ENCODE measurements at regions of chr6 and their contacts with region 1.

Region 1: DNA sequence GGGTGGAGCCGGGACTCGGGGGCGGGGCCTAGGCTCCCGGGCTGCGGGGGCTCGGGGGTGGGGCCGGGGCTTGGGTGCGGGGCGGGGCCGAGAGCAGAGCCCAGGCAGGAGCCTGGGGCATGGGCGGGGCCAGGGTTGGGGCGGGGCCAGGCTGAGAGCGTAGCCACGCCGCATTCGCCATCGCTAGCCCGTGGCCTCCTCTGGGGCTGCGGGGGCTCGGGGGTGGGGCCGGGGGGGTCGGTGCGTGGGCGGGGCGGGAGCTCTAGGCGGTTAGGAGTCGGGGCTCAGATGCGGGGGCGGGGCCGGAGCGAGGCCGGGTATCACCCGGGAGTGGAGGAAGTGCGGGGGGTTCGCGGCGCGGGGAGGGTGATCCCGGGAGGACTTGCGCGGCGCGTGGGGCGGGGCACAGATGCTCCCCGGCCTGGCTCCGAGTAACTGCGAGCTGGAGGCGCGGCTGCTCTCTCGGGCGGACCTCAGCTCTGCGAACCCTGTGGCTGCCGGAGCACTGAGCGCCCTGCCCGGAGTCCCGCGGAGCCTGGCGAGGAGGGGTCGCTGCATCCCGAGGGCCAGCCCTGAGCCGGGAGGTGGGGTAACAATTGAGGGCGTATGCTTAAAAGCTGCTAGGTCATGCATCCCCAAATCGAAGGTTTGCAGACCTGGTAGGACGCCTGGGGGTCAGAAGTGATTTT is 434 bp upstream of the ECI2 start:
- DNase-seq: peak; percentile 92 to 98
- H3K4me3 ChIP-seq: peak overlapping the region; percentile 80 to 87
- H3K27ac ChIP-seq: peak overlapping the region; percentile 90 to 94
- H3K4me1 ChIP-seq: peaks cover 0 to 9% of the 10 kb centered on the region in 2 donors
- H3K27me3 ChIP-seq: no peaks in the 10 kb centered on the region
- CTCF ChIP-seq: no peak

Region 2: GRCh38 chr6:3068329-3069214 is 1067.2 kb before region 1 on chr6 and contains the start of gene RIPK1:
- intact Hi-C with region 1: loop called (anchors 2 kb)
- DNase-seq: peak; percentile 74 to 95
- H3K4me3 ChIP-seq: peak within 1 kb of the TSS; percentile 77 to 85
- H3K27ac ChIP-seq: peak within 1 kb of the TSS; percentile 96 to 98
- H3K4me1 ChIP-seq: peaks cover 8 to 19% of the 10 kb centered on the region in 2 donors
- H3K27me3 ChIP-seq: no peaks in the 10 kb centered on the region
- CTCF ChIP-seq: peak in 2 of 3 experiments; percentile 26 to 46
- total RNA-seq, gene RIPK1: 20.1 TPM

Region 3: GRCh38 chr6:3798055-3798919 is 337.5 kb before region 1 on chr6:
- intact Hi-C with region 1: no loop called
- DNase-seq: no peak
- H3K4me3 ChIP-seq: no peak overlapping the region
- H3K27ac ChIP-seq: peak overlapping the region; percentile 19 to 61
- H3K4me1 ChIP-seq: peaks cover 11 to 29% of the 10 kb centered on the region in 2 donors
- H3K27me3 ChIP-seq: no peaks in the 10 kb centered on the region
- CTCF ChIP-seq: no peak

Region 4: GRCh38 chr6:4018172-4018905 is 117.5 kb before region 1 on chr6:
- intact Hi-C with region 1: loop called (anchors 2 kb)
- DNase-seq: peak; percentile 81 to 96
- H3K4me3 ChIP-seq: peak overlapping the region; percentile 78 to 81
- H3K27ac ChIP-seq: peak overlapping the region; percentile 97 to 99
- H3K4me1 ChIP-seq: peaks cover 7 to 36% of the 10 kb centered on the region in 2 donors
- H3K27me3 ChIP-seq: no peaks in the 10 kb centered on the region
- CTCF ChIP-seq: peak; percentile 43 to 48 (median 43)

Region 5: GRCh38 chr6:4358414-4359114 is 222.8 kb after region 1 on chr6:
- intact Hi-C with region 1: loop called (anchors 5 kb)
- DNase-seq: peak; percentile 94 to 99
- H3K4me3 ChIP-seq: peak overlapping the region; percentile 35 to 39
- H3K27ac ChIP-seq: peak overlapping the region; percentile 96 to 98
- H3K4me1 ChIP-seq: peaks cover 5 to 10% of the 10 kb centered on the region in 2 donors
- H3K27me3 ChIP-seq: no peaks in the 10 kb centered on the region
- CTCF ChIP-seq: no peak

Region 6: DNA sequence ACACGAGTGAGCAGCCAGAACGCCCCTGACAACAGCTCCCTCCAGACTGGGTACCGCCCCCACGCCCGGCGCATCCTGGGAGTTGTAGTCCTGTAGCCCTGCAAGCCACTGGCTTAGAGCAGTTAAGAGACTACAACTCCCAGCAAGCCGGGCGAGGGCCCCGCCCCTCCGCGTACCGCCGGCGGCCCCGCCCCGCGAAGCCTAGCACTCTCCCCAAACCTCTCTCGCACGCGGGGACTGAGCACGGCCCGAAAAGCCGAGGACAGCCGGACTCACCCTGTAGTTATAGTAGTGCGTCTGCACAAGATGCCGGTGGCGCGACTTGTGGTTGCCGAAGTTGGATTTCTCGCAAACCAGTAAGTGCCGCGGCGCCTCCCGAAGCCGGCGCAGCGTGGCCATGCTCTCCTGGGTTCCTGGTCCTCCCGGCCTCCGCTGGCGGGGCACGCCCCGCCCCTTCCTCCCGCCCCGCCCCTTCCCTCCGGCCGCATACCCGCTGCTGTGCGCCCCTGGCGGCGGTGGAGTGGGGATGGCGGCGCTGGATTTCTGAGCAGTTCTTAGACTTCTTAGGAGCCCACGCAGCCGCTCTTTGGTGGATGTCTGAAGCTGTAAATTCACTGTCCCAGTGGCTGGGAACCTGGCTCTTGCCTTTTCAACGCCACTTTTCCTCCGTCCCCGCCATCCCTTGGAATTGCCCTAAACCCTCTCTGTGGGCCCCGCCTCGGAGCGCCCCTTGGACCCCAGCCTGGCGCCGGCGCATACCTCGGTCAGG is 868.0 kb after region 1 on chr6 and contains the start of gene RPP40:
- intact Hi-C with region 1: loop called (anchors 5 kb)
- DNase-seq: peak; percentile 93 to 99
- H3K4me3 ChIP-seq: peak within 1 kb of the TSS; percentile 56 to 71
- H3K27ac ChIP-seq: peak within 1 kb of the TSS; percentile 92 to 95
- H3K4me1 ChIP-seq: no peaks in the 10 kb centered on the region
- H3K27me3 ChIP-seq: no peaks in the 10 kb centered on the region
- CTCF ChIP-seq: peak; percentile 72 to 93 (median 93)
- total RNA-seq, gene RPP40: not detected